IMR-90 (cell line): ENCODE measurements at regions of chr6 and their contacts with region 1.

Region 1: DNA sequence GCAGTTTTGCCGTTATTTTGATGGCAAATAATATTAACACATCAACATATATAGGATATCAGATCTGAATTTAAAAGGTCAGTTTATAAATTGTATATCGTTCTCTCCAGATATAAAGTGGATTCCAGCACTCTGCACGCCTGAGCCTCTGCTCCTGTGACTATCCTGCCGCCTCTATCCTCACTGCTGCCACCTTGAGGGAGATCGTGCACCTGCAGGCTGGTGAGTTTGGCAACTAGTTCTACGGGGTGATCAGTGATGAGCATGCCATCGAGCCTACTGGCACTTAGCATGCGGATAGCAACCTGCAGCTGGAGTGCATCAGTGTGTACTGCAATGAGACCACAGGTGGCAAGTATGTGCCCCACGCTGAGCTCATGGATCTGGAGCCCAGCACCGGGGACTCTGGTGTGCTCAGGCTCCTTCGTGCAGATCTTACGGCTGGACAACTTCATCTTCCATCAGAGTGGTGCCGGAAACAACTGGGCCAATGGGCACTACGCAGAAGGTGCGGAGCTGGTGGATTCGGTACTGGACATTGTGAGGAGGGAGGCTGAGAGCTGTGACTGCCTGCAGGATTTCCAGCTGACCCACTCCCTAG is 84.9 kb downstream of the FBXO5 start:
- DNase-seq: peak; percentile 46
- ATAC-seq: peak; percentile 100
- H3K4me3 ChIP-seq: no peak overlapping the region
- H3K27ac ChIP-seq: no peak overlapping the region
- H3K4me1 ChIP-seq: no peaks in the 10 kb centered on the region
- H3K27me3 ChIP-seq: no peaks in the 10 kb centered on the region; the same call in 1 of the 2 replicates
- CTCF ChIP-seq: peak; percentile 76
- POLR2A ChIP-seq: no peak
- RAD21 ChIP-seq: peak; percentile 45

Region 2: DNA sequence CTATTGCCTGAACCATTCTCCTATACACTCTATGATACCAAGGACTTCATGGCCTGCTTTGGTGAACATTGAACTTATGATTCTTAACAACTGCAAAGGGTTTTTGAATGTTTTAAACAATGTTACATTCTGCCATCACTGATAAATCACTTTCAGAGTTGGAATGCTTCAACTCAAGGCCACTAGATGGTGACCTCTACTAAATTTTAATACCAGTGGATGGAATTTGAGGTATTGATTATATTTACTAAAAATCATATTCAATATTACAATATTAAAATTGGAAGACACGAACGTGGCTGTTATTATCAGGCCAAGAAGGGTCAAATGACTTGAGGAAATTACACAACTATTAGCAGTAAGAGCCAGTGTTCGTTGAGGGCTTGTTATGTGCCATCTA is 181.6 kb before region 1 on chr6:
- CTCF ChIA-PET with region 1: no interaction called
- POLR2A ChIA-PET with region 1: no interaction called
- dilution Hi-C with region 1: no loop called
- in situ Hi-C with region 1: no loop called
- intact Hi-C with region 1: loop called (anchors 5 kb)
- DNase-seq: no peak
- ATAC-seq: no peak; the same call in 1 of the 2 replicates
- H3K4me3 ChIP-seq: no peak overlapping the region
- H3K27ac ChIP-seq: no peak overlapping the region
- H3K4me1 ChIP-seq: no peaks in the 10 kb centered on the region
- H3K27me3 ChIP-seq: no peaks in the 10 kb centered on the region
- CTCF ChIP-seq: 0 out of 2 replicates have a peak, but pooled peaks have one; percentile 29
- POLR2A ChIP-seq: no peak
- RAD21 ChIP-seq: peak; percentile 31; the same call in 1 of the 2 replicates

Region 3: GRCh38 chr6:152750694-152751093 is 147.2 kb before region 1 on chr6 and contains the start of gene VIP:
- CTCF ChIA-PET with region 1: no interaction called
- POLR2A ChIA-PET with region 1: no interaction called
- dilution Hi-C with region 1: no loop called
- in situ Hi-C with region 1: no loop called
- intact Hi-C with region 1: loop called (anchors 1 kb)
- DNase-seq: peak; percentile 42
- ATAC-seq: peak; percentile 81
- H3K4me3 ChIP-seq: no peak within 1 kb of the TSS
- H3K27ac ChIP-seq: no peak within 1 kb of the TSS
- H3K4me1 ChIP-seq: no peaks in the 10 kb centered on the region
- H3K27me3 ChIP-seq: no peaks in the 10 kb centered on the region
- CTCF ChIP-seq: no peak
- POLR2A ChIP-seq: no peak
- RAD21 ChIP-seq: no peak
- total RNA-seq, gene VIP: not detected in 2 replicates

Region 4: DNA sequence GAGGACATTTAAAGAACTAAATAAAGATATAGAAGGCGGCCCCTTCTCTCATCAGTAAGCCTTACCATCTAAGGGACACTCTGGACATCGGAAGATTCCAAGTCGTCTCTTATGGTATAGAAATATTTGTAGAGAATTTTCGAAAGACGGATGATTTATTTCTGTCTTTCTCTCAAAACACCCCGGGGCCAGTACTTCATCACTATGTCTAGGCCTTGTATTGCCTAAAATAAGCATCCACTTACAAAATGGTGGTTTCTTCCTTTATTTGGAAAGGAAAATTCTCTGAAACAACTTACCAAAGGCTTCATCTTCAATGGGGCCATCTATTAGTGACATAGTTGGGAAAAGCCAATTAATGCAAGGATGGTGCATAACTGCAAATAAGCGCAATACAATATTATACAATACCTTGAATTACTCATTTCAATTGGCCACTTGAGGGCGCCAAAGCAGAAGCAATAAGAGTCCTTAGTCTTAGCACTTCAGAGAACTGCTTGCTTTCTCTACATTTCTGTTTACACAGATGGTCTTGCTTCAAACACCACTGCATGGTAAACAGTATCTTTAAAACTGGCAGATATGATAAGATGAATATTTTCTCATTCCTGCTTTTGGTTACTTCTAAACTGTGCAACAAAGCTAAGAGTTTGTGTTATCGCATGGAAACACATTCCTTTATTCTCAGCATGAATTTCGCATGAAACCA is 34.1 kb before region 1 on chr6:
- CTCF ChIA-PET with region 1: no interaction called
- POLR2A ChIA-PET with region 1: no interaction called
- dilution Hi-C with region 1: no loop called
- in situ Hi-C with region 1: no loop called
- intact Hi-C with region 1: loop called (anchors 2 kb)
- DNase-seq: peak; percentile 74
- ATAC-seq: peak; percentile 95
- H3K4me3 ChIP-seq: no peak overlapping the region
- H3K27ac ChIP-seq: no peak overlapping the region
- H3K4me1 ChIP-seq: no peaks in the 10 kb centered on the region
- H3K27me3 ChIP-seq: no peaks in the 10 kb centered on the region; the same call in 1 of the 2 replicates
- CTCF ChIP-seq: peak; percentile 73
- POLR2A ChIP-seq: no peak
- RAD21 ChIP-seq: peak; percentile 84